ENCODE measurements at regions of chr1 and their contacts with region 1.

Region 1: DNA sequence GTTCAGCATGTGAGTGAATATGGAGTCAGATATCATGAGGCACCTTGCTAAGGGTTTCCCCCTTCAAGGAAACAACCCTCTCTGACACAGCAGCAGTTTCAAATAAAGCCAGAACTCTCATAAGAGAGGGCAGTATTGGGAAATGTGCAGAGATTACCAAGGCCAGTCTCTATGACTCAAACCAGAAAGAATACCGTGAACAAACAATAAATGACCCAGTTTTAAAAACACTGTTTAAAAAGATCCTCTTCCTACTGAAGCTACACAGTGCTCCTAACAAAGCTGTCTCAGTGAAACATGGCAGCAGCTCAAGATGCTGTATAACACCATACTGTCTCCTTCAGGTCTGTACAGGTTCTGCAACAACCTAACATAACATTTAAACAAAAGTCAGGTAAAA is 102.6 kb downstream of the KIAA0319L start:
- DNase-seq: no peak
- H3K27ac ChIP-seq: no peak overlapping the region
- CTCF ChIP-seq: no peak

Region 2: GRCh38 chr1:35202048-35202719 is 252.4 kb before region 1 on chr1:
- CTCF ChIA-PET with region 1: interaction called, 10 read pairs
- POLR2A ChIA-PET with region 1: no interaction called
- DNase-seq: peak; percentile 74
- H3K27ac ChIP-seq: no peak overlapping the region
- CTCF ChIP-seq: peak; percentile 88